ENCODE measurements at regions of chr10 and their contacts with region 1.

Region 1: DNA sequence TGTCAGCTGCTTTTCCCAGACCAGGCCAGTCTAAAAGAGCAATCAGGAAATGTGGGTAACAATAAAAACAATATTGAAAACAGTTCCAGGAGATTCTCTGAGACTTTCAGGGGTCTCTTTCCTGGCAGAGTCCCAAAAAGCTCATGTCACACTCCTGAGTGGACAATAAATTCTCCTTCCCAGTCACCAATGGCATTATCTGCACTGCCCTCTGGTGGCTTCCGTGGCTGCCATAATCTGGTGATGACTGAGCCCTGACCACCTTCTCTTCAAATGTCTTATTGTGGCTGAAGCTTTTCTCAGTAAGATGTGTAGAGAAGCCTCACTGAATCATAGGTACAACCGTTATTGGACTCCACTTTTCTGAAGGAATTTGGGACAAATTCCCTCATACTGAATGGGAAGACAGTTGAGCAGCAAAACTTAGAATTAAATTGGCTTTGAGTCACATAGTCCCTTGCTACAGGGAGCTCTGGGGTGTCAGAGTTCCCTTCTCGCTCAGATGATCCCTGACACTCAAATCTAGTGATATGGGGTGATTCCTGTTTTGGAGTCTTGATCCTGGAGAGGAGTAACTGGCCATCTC is 24.4 kb upstream of the ASAH2 start:
- DNase-seq: peak in 1 of 2 experiments; percentile 63
- H3K4me3 ChIP-seq: no peak overlapping the region
- H3K27ac ChIP-seq: no peak overlapping the region
- H3K4me1 ChIP-seq: no peaks in the 10 kb centered on the region
- H3K27me3 ChIP-seq: no peaks in the 10 kb centered on the region
- CTCF ChIP-seq: peak; percentile 62 to 76 (median 74)
- EP300 ChIP-seq: no peak
- POLR2A ChIP-seq: no peak
- RAD21 ChIP-seq: peak; percentile 63 to 65

Region 2: DNA sequence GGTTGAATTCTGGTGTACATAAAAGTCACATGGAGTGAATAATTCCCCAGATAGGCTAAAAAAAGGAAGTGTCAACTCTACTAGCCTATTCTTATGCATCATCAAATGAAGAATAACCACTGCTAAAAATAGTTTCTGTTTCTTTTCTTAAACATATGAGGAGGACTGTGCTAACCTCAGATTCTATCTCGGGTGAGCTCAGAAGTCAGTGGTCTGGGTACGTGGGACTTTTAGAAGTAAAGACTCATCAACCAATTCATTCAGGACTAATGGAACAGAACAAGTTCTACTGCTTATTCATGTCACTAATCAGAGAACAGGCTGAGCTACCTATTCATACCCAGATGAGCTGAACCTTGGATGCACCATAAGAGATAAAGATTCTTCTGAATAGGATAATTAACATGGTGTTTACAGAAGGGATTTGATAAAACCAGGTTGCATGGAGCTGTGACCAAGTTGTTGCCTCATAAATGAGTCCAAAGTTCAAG is 14.9 kb before region 1 on chr10:
- CTCF ChIA-PET with region 1: interaction called, 13 read pairs
- POLR2A ChIA-PET with region 1: no interaction called
- DNase-seq: no peak
- H3K4me3 ChIP-seq: no peak overlapping the region
- H3K27ac ChIP-seq: no peak overlapping the region
- H3K4me1 ChIP-seq: no peaks in the 10 kb centered on the region
- H3K27me3 ChIP-seq: no peaks in the 10 kb centered on the region
- CTCF ChIP-seq: no peak
- EP300 ChIP-seq: no peak
- POLR2A ChIP-seq: no peak
- RAD21 ChIP-seq: no peak

Region 3: DNA sequence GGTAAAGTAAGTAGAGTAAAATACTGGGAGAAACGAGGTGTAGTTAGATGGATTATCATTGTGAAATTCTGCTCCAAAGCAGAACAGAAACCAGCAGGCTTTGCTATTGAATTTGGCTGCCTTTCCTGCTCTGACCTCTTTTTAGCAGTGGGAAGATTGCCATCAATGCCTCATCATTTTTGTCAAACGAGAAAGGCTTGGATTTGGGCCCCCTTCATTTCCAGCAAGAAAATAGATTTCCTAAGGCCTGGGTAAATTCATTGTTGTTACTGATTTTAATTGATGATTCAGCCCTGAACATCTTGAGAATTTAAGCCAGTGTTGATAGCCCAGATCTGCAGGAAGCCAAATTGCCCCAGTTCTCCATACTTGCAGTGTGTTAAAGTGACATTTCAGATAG is 10.8 kb after region 1 on chr10:
- CTCF ChIA-PET with region 1: interaction called, 11 read pairs
- POLR2A ChIA-PET with region 1: no interaction called
- DNase-seq: no peak
- H3K4me3 ChIP-seq: no peak overlapping the region
- H3K27ac ChIP-seq: no peak overlapping the region
- H3K4me1 ChIP-seq: no peaks in the 10 kb centered on the region
- H3K27me3 ChIP-seq: no peaks in the 10 kb centered on the region
- CTCF ChIP-seq: no peak
- EP300 ChIP-seq: no peak
- POLR2A ChIP-seq: no peak
- RAD21 ChIP-seq: no peak

Region 4: GRCh38 chr10:50299948-50300669 is 24.4 kb after region 1 on chr10:
- CTCF ChIA-PET with region 1: no interaction called
- POLR2A ChIA-PET with region 1: no interaction called
- DNase-seq: no peak
- H3K4me3 ChIP-seq: no peak overlapping the region
- H3K27ac ChIP-seq: no peak overlapping the region
- H3K4me1 ChIP-seq: no peaks in the 10 kb centered on the region
- H3K27me3 ChIP-seq: no peaks in the 10 kb centered on the region
- CTCF ChIP-seq: no peak
- EP300 ChIP-seq: no peak
- POLR2A ChIP-seq: no peak
- RAD21 ChIP-seq: no peak

Region 5: GRCh38 chr10:50310560-50311174 is 34.9 kb after region 1 on chr10:
- CTCF ChIA-PET with region 1: interaction called, 23 read pairs
- POLR2A ChIA-PET with region 1: no interaction called
- DNase-seq: peak in 1 of 2 experiments; percentile 77
- H3K4me3 ChIP-seq: no peak overlapping the region
- H3K27ac ChIP-seq: no peak overlapping the region
- H3K4me1 ChIP-seq: no peaks in the 10 kb centered on the region
- H3K27me3 ChIP-seq: no peaks in the 10 kb centered on the region
- CTCF ChIP-seq: peak; percentile 52 to 92 (median 74)
- EP300 ChIP-seq: no peak
- POLR2A ChIP-seq: no peak
- RAD21 ChIP-seq: peak; percentile 50 to 73

Region 6: DNA sequence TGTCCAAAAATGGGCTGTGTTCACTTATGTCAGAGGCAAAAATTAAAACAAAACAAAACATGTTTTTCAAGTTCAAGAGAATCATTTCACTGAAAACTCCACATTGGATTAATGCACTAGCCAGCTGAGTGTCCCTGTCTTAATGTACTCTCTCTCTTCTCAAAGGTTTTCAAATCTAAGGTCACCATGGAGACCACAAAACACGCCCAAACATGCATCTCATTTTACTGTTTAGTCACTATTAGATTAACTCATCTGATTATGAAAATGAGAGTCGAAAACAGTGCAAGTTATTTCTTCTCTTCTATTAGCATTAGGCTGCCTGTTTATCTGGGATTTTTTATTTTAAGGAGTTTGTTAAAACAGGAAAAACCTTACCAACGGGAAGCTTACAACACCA is 46.3 kb after region 1 on chr10:
- CTCF ChIA-PET with region 1: no interaction called
- POLR2A ChIA-PET with region 1: no interaction called
- DNase-seq: no peak
- H3K4me3 ChIP-seq: no peak overlapping the region
- H3K27ac ChIP-seq: no peak overlapping the region
- H3K4me1 ChIP-seq: peaks cover 3 to 10% (median 4%) of the 10 kb centered on the region in 4 experiments; a peak in 5 of 7 replicates
- H3K27me3 ChIP-seq: no peaks in the 10 kb centered on the region
- CTCF ChIP-seq: no peak
- EP300 ChIP-seq: no peak
- POLR2A ChIP-seq: no peak
- RAD21 ChIP-seq: no peak

Measured in H1 (cell line).